CD14-positive monocyte (primary cell): ENCODE measurements at regions of chr7 and their contacts with region 1.

Region 1: DNA sequence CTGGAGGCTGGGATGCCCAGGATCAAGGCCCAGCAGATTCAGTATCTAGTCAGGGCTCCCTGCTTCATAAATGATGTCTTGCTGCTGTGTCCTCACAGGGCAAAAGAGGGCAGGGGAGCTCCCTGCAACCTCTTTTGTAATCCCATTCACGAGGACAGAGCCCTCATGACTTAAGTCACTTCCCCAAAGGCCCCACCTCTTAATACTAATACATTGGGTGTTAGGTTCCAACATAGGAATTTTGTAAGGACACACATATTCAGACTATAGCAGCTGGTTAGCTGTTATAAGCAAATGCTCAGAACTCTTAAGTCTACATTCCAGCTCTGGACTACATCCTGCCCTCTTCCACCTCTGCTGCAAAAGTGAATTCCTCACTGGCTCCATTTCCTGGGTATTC is 63.0 kb downstream of the VOPP1 start:
- DNase-seq: peak; percentile 83 to 93 (median 84)
- H3K4me3 ChIP-seq: no peak overlapping the region
- H3K4me3 Mint-ChIP-seq: no peak overlapping the region
- H3K27ac ChIP-seq: peak overlapping the region in 1 of 2 donors; percentile 67
- H3K27ac Mint-ChIP-seq: peak overlapping the region; percentile 28 to 93 (median 81)
- H3K4me1 ChIP-seq: peaks cover 5 to 20% of the 10 kb centered on the region in 2 donors
- H3K4me1 Mint-ChIP-seq: peaks cover 24% of the 10 kb centered on the region
- H3K27me3 ChIP-seq: no peaks in the 10 kb centered on the region
- H3K27me3 Mint-ChIP-seq: no peaks in the 10 kb centered on the region
- CTCF ChIP-seq: no peak

Region 2: GRCh38 chr7:55335151-55335550 is 174.2 kb before region 1 on chr7:
- intact Hi-C with region 1: no loop called
- DNase-seq: no peak
- H3K4me3 ChIP-seq: no peak overlapping the region
- H3K4me3 Mint-ChIP-seq: no peak overlapping the region
- H3K27ac ChIP-seq: no peak overlapping the region
- H3K27ac Mint-ChIP-seq: no peak overlapping the region
- H3K4me1 ChIP-seq: no peaks in the 10 kb centered on the region
- H3K4me1 Mint-ChIP-seq: no peaks in the 10 kb centered on the region
- H3K27me3 ChIP-seq: no peaks in the 10 kb centered on the region
- H3K27me3 Mint-ChIP-seq: peaks cover 0 to 4% (median 1%) of the 10 kb centered on the region in 3 donors
- CTCF ChIP-seq: no peak

Region 3: DNA sequence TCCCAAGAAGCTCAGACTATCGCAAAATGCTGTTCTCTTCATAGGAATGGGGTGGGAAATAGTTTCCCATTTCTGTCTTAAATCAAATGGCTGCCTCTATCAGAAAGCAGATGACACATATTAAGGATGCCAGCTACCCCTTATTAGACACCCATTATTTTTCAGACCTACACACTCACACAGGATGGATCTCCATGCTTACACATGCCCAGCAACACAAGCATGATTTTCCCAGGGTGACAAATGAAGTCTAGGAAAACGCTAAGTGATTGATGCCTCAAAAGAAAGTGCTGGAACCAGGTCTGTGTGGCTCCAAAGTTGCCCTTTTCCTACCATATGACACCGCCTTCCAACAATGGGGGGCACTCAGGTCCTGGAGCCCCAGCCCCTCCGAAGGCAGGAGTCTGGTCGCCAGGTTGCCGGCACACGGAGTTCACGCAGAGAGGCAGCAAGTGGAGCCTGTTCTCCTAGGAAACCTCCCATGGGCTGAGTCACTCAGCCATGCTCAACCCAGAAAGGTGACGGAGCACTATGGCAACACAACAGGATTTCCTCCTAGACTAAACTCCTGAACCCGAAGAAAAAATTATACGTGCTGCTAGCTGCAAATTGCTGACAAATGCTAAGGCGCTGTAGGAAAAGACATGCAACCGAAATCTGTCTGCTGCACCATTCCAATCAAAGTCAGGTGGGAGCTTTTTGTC is 43.1 kb after region 1 on chr7:
- intact Hi-C with region 1: loop called in 1 of 2 experiments (anchors 5 kb)
- DNase-seq: peak; percentile 86 to 91 (median 89)
- H3K4me3 ChIP-seq: peak overlapping the region in 1 of 3 experiments; percentile 24
- H3K4me3 Mint-ChIP-seq: peak overlapping the region; percentile 60 to 72
- H3K27ac ChIP-seq: peak overlapping the region; percentile 34 to 66
- H3K27ac Mint-ChIP-seq: peak overlapping the region; percentile 46 to 92 (median 83)
- H3K4me1 ChIP-seq: peaks cover 13 to 14% of the 10 kb centered on the region in 2 donors
- H3K4me1 Mint-ChIP-seq: peaks cover 49% of the 10 kb centered on the region
- H3K27me3 ChIP-seq: no peaks in the 10 kb centered on the region
- H3K27me3 Mint-ChIP-seq: no peaks in the 10 kb centered on the region
- CTCF ChIP-seq: no peak